ENCODE measurements at regions of chr12 and their contacts with region 1.

Region 1: DNA sequence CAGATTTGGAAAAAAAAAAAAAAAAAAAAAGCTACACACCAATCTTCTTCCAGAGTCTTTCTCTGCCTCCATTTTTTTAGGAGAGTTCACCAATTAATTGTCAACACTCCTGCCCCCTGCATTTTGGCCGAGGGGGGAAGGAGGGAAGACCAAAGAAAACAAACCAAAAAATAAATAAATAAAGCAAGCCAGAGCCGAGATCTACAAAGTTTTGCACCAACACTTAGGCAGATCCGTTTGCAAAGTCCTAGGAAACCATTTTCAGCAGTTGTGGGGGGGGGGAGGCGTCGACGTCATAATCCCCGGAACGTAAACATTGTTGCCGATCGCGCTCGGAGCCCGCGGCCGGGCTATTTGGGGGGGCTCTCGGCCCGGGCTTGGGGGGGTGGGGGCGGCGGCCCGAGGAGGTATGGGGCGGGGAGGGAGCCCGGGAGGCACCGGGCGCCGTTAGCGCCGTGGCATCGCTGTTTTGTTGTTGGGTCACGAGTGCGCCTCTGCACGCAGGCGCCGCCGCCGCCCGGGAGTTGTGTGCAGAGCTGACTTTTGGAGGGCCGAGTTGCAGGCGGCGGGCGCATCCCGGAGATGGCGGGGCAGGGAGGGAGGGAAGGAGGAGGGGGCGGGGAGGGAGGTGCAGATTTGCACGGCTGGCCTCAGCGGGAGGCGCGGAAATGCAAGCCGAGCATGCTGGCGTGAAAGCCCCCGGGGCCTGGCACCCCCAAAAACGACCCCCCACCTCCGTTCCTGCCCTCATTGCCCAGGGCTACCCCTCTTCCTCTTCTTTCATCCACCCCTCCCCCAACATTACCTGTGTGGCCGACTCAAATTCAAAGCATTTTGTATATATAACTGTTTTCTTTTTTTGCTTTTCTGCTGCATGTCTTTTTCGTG is 598 bp downstream of the KDM2B start:
- DNase-seq: peak; percentile 70
- H3K4me3 Mint-ChIP-seq: peak overlapping the region; percentile 98
- H3K27ac Mint-ChIP-seq: peak overlapping the region; percentile 99
- H3K4me1 Mint-ChIP-seq: peaks cover 31% of the 10 kb centered on the region
- H3K27me3 Mint-ChIP-seq: no peaks in the 10 kb centered on the region

Region 2: GRCh38 chr12:121536054-121536898 is 43.9 kb before region 1 on chr12:
- intact Hi-C with region 1: loop called (anchors 5 kb)
- DNase-seq: no peak
- H3K4me3 Mint-ChIP-seq: peak overlapping the region; percentile 74
- H3K27ac Mint-ChIP-seq: no peak overlapping the region
- H3K4me1 Mint-ChIP-seq: peaks cover 33% of the 10 kb centered on the region
- H3K27me3 Mint-ChIP-seq: no peaks in the 10 kb centered on the region

Region 3: GRCh38 chr12:121550974-121551634 is 29.1 kb before region 1 on chr12:
- intact Hi-C with region 1: no loop called
- DNase-seq: no peak
- H3K4me3 Mint-ChIP-seq: no peak overlapping the region
- H3K27ac Mint-ChIP-seq: no peak overlapping the region
- H3K4me1 Mint-ChIP-seq: peaks cover 2% of the 10 kb centered on the region
- H3K27me3 Mint-ChIP-seq: no peaks in the 10 kb centered on the region

Region 4: DNA sequence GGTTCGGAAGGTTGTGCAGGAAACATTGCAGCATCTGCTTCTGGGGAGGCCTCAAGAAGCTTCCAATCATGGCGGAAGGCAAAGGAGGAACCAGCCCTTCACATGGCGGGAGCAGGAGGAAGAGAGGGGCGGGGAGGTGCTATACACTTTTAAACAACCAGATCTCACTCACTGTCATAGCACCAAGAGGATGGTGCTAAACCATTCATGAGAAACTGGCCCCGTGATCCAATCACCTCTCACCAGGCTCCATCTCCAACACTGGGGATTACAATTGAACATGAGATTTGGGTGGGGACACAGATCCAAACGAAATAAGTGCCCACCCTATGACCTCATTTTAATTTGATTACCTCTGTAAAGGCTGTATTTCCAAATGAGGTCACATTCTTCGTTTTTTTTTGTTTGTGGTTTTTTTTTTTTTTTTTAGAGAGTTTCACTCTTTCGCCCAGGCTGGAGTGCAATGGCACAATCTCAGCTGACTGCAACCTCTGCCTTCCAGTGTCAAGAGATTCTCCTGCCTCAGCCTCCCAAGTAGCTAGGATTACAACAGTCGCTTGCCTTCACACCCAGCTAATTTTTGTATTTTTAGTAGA is 34.7 kb after region 1 on chr12:
- intact Hi-C with region 1: loop called (anchors 2 kb)
- DNase-seq: no peak
- H3K4me3 Mint-ChIP-seq: no peak overlapping the region
- H3K27ac Mint-ChIP-seq: no peak overlapping the region
- H3K4me1 Mint-ChIP-seq: peaks cover 1% of the 10 kb centered on the region
- H3K27me3 Mint-ChIP-seq: no peaks in the 10 kb centered on the region

Measured in activated T-helper 2 cell treated with anti-CD3 and anti-CD28 coated beads, Interferon-gamma antibody, Interleukin-2, Interleukin-4, amounts not matched to agents 10 μg/mL and 5 μg/mL and 100 μg/mL, durations not matched to agents 14 hours and 24 hours and 36 hours (primary cell).